Caco-2 (cell line): ENCODE measurements at regions of chr3 and their contacts with region 1.

Region 1: DNA sequence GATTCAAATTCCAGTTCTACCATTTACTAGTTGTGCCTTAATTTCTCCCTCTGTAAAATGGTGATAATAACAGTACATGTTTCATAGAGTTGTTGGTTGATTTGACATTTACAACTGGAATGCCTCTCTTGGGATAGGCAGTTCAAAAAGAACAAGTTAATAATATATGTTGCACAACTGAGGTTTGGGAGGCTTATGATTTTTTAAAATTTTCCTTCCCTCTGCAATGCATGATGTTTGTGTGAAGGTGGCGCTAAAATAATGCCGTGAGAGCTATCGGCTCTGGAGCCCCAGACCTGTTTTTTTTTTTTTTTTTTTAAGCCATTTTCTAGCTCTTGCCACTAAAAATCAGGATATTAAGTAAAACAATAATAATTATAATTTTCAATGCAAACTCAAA is 18.6 kb downstream of the DNAJB11 start:
- DNase-seq: peak in 1 of 2 experiments; percentile 43
- H3K4me3 ChIP-seq: no peak overlapping the region
- H3K4me3 Mint-ChIP-seq: no peak overlapping the region
- H3K27ac Mint-ChIP-seq: peak overlapping the region; percentile 71
- H3K4me1 ChIP-seq: peaks cover 54% of the 10 kb centered on the region
- H3K4me1 Mint-ChIP-seq: peaks cover 19% of the 10 kb centered on the region
- H3K27me3 ChIP-seq: no peaks in the 10 kb centered on the region
- H3K27me3 Mint-ChIP-seq: no peaks in the 10 kb centered on the region
- CTCF ChIP-seq: peak; percentile 40 to 56

Region 2: DNA sequence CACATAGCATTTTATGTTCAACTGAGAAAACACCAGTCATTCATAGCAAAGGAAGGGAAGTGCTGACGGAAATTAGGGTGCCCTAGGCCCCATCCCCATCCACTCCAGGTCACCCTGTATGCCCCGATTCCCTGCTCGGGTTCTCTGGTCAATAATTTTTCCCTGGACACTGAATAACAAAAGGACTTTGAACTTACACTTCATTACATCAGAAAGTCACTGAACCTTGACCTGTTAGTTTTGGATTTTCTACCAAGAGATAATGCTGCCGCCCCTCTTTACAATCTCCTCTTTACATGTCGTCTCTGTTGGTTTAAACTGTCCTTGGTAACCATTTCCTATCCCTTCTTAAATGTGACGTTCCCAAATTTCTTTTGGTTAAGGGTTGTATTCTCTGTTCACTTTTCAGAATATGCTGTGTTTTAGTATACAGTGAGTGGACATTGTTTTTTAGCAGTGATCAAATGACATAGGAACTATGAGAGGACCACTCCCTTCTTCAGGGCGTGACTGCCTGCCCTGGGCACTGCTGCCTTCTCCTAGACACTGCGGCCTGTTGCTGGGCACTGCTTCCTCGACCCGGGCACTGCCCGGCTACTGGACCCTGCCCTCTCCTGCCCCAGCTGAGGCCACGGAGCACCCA is 10.1 kb after region 1 on chr3:
- CTCF ChIA-PET with region 1: no interaction called
- POLR2A ChIA-PET with region 1: no interaction called
- intact Hi-C with region 1: loop called (anchors 1 kb)
- DNase-seq: peak in 1 of 2 experiments; percentile 60
- H3K4me3 ChIP-seq: no peak overlapping the region
- H3K4me3 Mint-ChIP-seq: peak overlapping the region; percentile 50
- H3K27ac Mint-ChIP-seq: peak overlapping the region; percentile 96
- H3K4me1 ChIP-seq: peaks cover 75% of the 10 kb centered on the region
- H3K4me1 Mint-ChIP-seq: peaks cover 70% of the 10 kb centered on the region
- H3K27me3 ChIP-seq: no peaks in the 10 kb centered on the region
- H3K27me3 Mint-ChIP-seq: no peaks in the 10 kb centered on the region
- CTCF ChIP-seq: no peak

Region 3: GRCh38 chr3:186609247-186609868 is 20.2 kb after region 1 on chr3:
- CTCF ChIA-PET with region 1: interaction called, 21 read pairs
- POLR2A ChIA-PET with region 1: interaction called, 5 read pairs
- intact Hi-C with region 1: loop called (anchors 1 kb)
- DNase-seq: peak; percentile 54 to 61
- H3K4me3 ChIP-seq: no peak overlapping the region
- H3K4me3 Mint-ChIP-seq: no peak overlapping the region
- H3K27ac Mint-ChIP-seq: peak overlapping the region; percentile 61
- H3K4me1 ChIP-seq: peaks cover 43% of the 10 kb centered on the region
- H3K4me1 Mint-ChIP-seq: peaks cover 41% of the 10 kb centered on the region
- H3K27me3 ChIP-seq: no peaks in the 10 kb centered on the region
- H3K27me3 Mint-ChIP-seq: no peaks in the 10 kb centered on the region
- CTCF ChIP-seq: peak; percentile 21 to 28

Region 4: DNA sequence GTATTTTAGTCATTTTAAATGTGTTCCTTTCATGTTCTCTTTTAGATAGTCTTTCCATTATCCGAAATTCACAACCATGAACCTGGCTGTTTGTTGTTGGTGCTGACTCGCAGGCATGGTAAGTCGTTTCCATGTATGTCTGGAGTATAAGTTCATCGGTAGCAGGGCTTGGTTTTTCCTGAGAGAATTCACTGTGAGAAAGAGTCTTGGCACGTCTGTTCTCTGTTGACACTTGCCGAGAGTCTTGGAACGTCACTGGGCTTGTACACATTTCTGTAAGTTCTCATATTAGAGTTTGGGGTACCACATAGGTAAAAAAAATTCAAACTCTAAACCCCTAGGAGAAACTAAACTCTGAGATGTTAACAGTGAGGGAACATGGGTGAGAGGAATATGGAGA is 164.9 kb after region 1 on chr3:
- CTCF ChIA-PET with region 1: interaction called, 8 read pairs
- POLR2A ChIA-PET with region 1: no interaction called
- intact Hi-C with region 1: loop called (anchors 1 kb)
- DNase-seq: no peak
- H3K4me3 ChIP-seq: no peak overlapping the region
- H3K4me3 Mint-ChIP-seq: no peak overlapping the region
- H3K27ac Mint-ChIP-seq: no peak overlapping the region
- H3K4me1 ChIP-seq: peaks cover 6% of the 10 kb centered on the region; the same call in 1 of the 2 replicates
- H3K4me1 Mint-ChIP-seq: no peaks in the 10 kb centered on the region
- H3K27me3 ChIP-seq: no peaks in the 10 kb centered on the region
- H3K27me3 Mint-ChIP-seq: no peaks in the 10 kb centered on the region
- CTCF ChIP-seq: no peak

Region 5: GRCh38 chr3:186821429-186822367 is 232.6 kb after region 1 on chr3:
- CTCF ChIA-PET with region 1: no interaction called
- POLR2A ChIA-PET with region 1: no interaction called
- intact Hi-C with region 1: loop called (anchors 1 kb)
- DNase-seq: peak in 1 of 2 experiments; percentile 47
- H3K4me3 ChIP-seq: no peak overlapping the region
- H3K4me3 Mint-ChIP-seq: no peak overlapping the region
- H3K27ac Mint-ChIP-seq: no peak overlapping the region
- H3K4me1 ChIP-seq: no peaks in the 10 kb centered on the region
- H3K4me1 Mint-ChIP-seq: peaks cover 5% of the 10 kb centered on the region
- H3K27me3 ChIP-seq: no peaks in the 10 kb centered on the region
- H3K27me3 Mint-ChIP-seq: no peaks in the 10 kb centered on the region
- CTCF ChIP-seq: peak; percentile 58 to 62